CD14-positive monocyte (primary cell): ENCODE measurements at regions of chr2 and their contacts with region 1.

Region 1: DNA sequence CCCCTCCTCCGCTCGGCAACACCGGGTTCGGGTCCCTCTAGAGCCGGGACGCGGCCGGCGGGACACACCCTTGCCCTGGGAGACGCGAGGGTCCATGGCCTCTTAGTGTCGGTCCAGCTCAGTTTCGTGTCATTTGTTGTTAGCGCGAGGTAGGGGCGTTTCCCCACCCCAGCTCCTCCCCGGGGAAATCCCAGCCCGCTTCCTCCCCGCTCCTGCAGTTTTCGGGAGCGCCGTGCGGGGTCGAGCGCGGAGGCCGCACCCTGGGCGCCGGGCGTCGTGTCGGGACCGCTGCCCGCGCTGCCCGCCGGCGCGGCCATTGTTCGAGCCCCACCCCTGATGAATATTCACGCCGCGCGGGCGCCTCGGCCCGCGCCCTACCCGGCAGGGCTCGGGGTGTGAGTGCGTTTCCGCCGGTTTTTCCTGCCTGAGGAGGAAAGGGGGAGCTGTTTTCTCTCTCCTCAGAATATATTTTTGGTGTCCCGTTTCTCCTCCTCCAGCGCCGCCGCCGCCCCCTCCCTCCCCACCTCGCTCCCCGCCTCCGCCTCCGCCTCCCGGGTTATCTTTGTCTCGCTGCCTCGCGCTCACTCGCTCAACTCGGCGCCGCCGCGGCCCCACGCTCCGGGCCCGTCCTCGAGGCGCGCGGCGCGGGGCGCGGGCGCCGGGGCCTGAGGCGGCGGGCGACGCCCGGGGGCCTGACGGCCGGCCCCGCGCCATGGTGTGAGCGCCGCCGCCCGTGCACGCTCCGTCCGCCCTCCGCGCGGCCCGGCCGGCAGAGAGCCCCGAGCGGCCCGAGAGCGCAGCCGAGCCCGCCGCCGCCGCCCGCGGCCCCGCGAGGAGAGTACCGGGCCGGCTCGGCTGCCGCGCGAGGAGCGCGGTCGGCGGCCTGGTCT is at the start of gene MAP4K4:
- DNase-seq: peak; percentile 70 to 85 (median 70)
- H3K4me3 ChIP-seq: peak within 1 kb of the TSS; percentile 82 to 100 (median 94)
- H3K4me3 Mint-ChIP-seq: peak within 1 kb of the TSS; percentile 83 to 90
- H3K27ac ChIP-seq: peak within 1 kb of the TSS; percentile 64 to 88
- H3K27ac Mint-ChIP-seq: peak within 1 kb of the TSS in 6 of 7 donors; percentile 77 to 92 (median 90)
- H3K4me1 ChIP-seq: peaks cover 39 to 47% of the 10 kb centered on the region in 2 donors
- H3K4me1 Mint-ChIP-seq: peaks cover 19% of the 10 kb centered on the region
- H3K27me3 ChIP-seq: no peaks in the 10 kb centered on the region
- H3K27me3 Mint-ChIP-seq: peaks cover 1 to 10% (median 9%) of the 10 kb centered on the region in 3 donors
- CTCF ChIP-seq: no peak
- polyA plus RNA-seq, gene MAP4K4: 5.3 to 66.9 (median 8.7) TPM

Region 2: GRCh38 chr2:101419096-101419663 is 278.2 kb before region 1 on chr2:
- intact Hi-C with region 1: loop called in 1 of 2 experiments (anchors 10 kb)
- DNase-seq: peak; percentile 51 to 73 (median 72)
- H3K4me3 ChIP-seq: no peak overlapping the region
- H3K4me3 Mint-ChIP-seq: no peak overlapping the region
- H3K27ac ChIP-seq: no peak overlapping the region
- H3K27ac Mint-ChIP-seq: peak overlapping the region in 1 of 7 donors; percentile 44
- H3K4me1 ChIP-seq: peaks cover 9 to 10% of the 10 kb centered on the region in 2 donors
- H3K4me1 Mint-ChIP-seq: peaks cover 12% of the 10 kb centered on the region
- H3K27me3 ChIP-seq: no peaks in the 10 kb centered on the region
- H3K27me3 Mint-ChIP-seq: peaks cover 0 to 1% (median 0%) of the 10 kb centered on the region in 3 donors
- CTCF ChIP-seq: peak; percentile 79

Region 3: DNA sequence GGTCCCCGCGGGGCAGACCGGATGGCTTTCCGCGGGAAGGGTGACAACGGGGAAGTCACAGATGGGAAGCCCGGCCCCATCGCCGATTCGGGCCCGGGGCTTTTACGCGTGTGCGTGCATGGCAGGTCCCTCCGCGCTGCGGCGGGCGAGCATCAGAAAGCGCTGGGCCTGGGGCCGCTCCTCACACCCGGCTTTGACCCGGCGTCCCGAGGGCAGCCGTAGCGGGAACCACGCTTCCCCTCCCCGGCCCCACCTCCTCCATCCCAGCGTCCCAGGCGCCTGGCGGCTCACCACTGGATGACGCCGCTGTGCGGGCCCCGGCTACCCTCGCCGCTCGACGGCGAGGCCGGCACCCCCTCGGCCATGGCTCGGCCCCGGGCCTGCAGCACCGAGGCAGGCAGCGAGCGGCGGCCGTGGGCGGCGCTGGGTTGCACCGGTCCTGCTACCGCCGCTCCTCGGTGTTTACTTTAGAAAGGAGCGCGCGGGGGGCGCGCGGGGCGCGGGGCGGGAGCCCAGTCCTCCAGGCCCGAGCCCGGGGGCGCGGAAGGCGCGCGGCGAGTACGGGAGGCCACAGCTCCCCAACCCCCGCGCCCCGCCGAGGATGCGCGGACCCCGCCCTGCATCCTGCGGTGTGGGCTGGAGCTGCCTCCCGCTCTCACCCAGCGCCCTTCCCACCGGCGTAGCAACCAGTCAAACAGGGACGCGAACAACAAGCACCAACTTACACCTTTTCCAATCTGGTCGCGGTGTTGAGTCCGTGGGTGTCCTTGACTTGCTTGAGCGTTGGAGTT is 223.3 kb before region 1 on chr2:
- intact Hi-C with region 1: loop called in 1 of 2 experiments (anchors 5 kb)
- DNase-seq: peak; percentile 35 to 63 (median 44)
- H3K4me3 ChIP-seq: peak overlapping the region; percentile 26 to 73 (median 42)
- H3K4me3 Mint-ChIP-seq: peak overlapping the region; percentile 79 to 89
- H3K27ac ChIP-seq: no peak overlapping the region
- H3K27ac Mint-ChIP-seq: peak overlapping the region in 5 of 7 donors; percentile 5 to 81 (median 46)
- H3K4me1 ChIP-seq: peaks cover 35 to 45% of the 10 kb centered on the region in 2 donors
- H3K4me1 Mint-ChIP-seq: peaks cover 46% of the 10 kb centered on the region
- H3K27me3 ChIP-seq: peaks cover 54 to 55% of the 10 kb centered on the region in 2 donors
- H3K27me3 Mint-ChIP-seq: peaks cover 60 to 82% (median 77%) of the 10 kb centered on the region in 3 donors
- CTCF ChIP-seq: no peak

Region 4: DNA sequence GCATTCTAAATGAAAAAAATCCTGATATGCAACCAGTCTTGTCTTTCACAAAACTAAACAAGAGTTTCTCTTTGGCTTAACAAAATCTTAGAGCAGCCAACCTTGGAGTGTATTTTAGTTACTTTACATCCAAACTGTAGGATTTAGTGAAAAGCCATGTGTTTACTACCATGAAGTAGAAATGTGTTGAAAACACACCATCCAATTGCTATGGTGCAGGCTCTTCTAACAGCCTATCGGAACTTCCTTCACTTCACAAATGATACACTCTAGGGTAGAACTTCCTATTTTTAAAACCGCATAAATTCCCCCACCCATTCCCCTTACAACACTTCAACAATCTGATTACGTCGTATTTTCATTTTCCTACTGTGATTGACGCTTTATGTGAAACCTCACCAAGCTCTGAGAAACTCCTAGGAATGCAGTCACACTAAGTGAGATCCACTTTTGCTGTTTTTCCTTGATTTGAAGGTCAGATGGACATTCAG is 74.3 kb before region 1 on chr2:
- intact Hi-C with region 1: loop called in 1 of 2 experiments (anchors 10 kb)
- DNase-seq: peak; percentile 86 to 95 (median 94)
- H3K4me3 ChIP-seq: peak overlapping the region in 1 of 3 experiments; percentile 37
- H3K4me3 Mint-ChIP-seq: peak overlapping the region in 1 of 2 donors; percentile 79
- H3K27ac ChIP-seq: peak overlapping the region in 1 of 2 donors; percentile 73
- H3K27ac Mint-ChIP-seq: peak overlapping the region; percentile 72 to 96 (median 89)
- H3K4me1 ChIP-seq: peaks cover 87% of the 10 kb centered on the region in 2 donors
- H3K4me1 Mint-ChIP-seq: peaks cover 84% of the 10 kb centered on the region
- H3K27me3 ChIP-seq: no peaks in the 10 kb centered on the region
- H3K27me3 Mint-ChIP-seq: peaks cover 16 to 23% (median 21%) of the 10 kb centered on the region in 3 donors
- CTCF ChIP-seq: no peak

Region 5: GRCh38 chr2:101736861-101737291 is 39.5 kb after region 1 on chr2:
- intact Hi-C with region 1: loop called (anchors 5 kb)
- DNase-seq: peak; percentile 73 to 94 (median 93)
- H3K4me3 ChIP-seq: peak overlapping the region in 1 of 3 experiments; percentile 27
- H3K4me3 Mint-ChIP-seq: peak overlapping the region in 1 of 2 donors; percentile 75
- H3K27ac ChIP-seq: peak overlapping the region in 1 of 2 donors; percentile 77
- H3K27ac Mint-ChIP-seq: peak overlapping the region; percentile 71 to 93 (median 90)
- H3K4me1 ChIP-seq: peaks cover 82 to 89% of the 10 kb centered on the region in 2 donors
- H3K4me1 Mint-ChIP-seq: peaks cover 86% of the 10 kb centered on the region
- H3K27me3 ChIP-seq: no peaks in the 10 kb centered on the region
- H3K27me3 Mint-ChIP-seq: no peaks in the 10 kb centered on the region
- CTCF ChIP-seq: no peak

Region 6: GRCh38 chr2:101823347-101823791 is 126.0 kb after region 1 on chr2:
- intact Hi-C with region 1: loop called in 1 of 2 experiments (anchors 10 kb)
- DNase-seq: peak; percentile 27 to 45 (median 45)
- H3K4me3 ChIP-seq: no peak overlapping the region
- H3K4me3 Mint-ChIP-seq: no peak overlapping the region
- H3K27ac ChIP-seq: no peak overlapping the region
- H3K27ac Mint-ChIP-seq: peak overlapping the region in 1 of 7 donors; percentile 14
- H3K4me1 ChIP-seq: peaks cover 0 to 20% of the 10 kb centered on the region in 2 donors
- H3K4me1 Mint-ChIP-seq: peaks cover 24% of the 10 kb centered on the region
- H3K27me3 ChIP-seq: no peaks in the 10 kb centered on the region
- H3K27me3 Mint-ChIP-seq: no peaks in the 10 kb centered on the region
- CTCF ChIP-seq: peak; percentile 73